MCF 10A (cell line): ENCODE measurements at regions of chr10 and their contacts with region 1.

Region 1: GRCh38 chr10:101141616-101142532 is 10.8 kb downstream of the TLX1 start:
- DNase-seq: peak; percentile 87
- H3K4me3 Mint-ChIP-seq: no peak overlapping the region
- H3K27ac Mint-ChIP-seq: no peak overlapping the region
- H3K4me1 Mint-ChIP-seq: peaks cover 16% of the 10 kb centered on the region
- H3K27me3 Mint-ChIP-seq: peaks cover 41% of the 10 kb centered on the region
- CTCF ChIP-seq: peak; percentile 96

Region 2: GRCh38 chr10:100744987-100745881 is 396.6 kb before region 1 on chr10 and contains the start of gene PAX2:
- CTCF ChIA-PET with region 1: no interaction called
- POLR2A ChIA-PET with region 1: no interaction called
- intact Hi-C with region 1: no loop called
- DNase-seq: no peak
- H3K4me3 Mint-ChIP-seq: peak within 1 kb of the TSS; percentile 28
- H3K27ac Mint-ChIP-seq: no peak within 1 kb of the TSS
- H3K4me1 Mint-ChIP-seq: peaks cover 7% of the 10 kb centered on the region
- H3K27me3 Mint-ChIP-seq: peaks cover 94% of the 10 kb centered on the region
- CTCF ChIP-seq: no peak
- total RNA-seq, gene PAX2: not detected in 2 replicates

Region 3: GRCh38 chr10:101050208-101051069 is 91.4 kb before region 1 on chr10:
- CTCF ChIA-PET with region 1: interaction called, 29 read pairs
- POLR2A ChIA-PET with region 1: interaction called, 3 read pairs
- intact Hi-C with region 1: no loop called
- DNase-seq: peak; percentile 64
- H3K4me3 Mint-ChIP-seq: peak overlapping the region; percentile 47
- H3K27ac Mint-ChIP-seq: no peak overlapping the region
- H3K4me1 Mint-ChIP-seq: peaks cover 8% of the 10 kb centered on the region
- H3K27me3 Mint-ChIP-seq: no peaks in the 10 kb centered on the region
- CTCF ChIP-seq: peak; percentile 85

Region 4: GRCh38 chr10:101075775-101076174 is 66.1 kb before region 1 on chr10:
- CTCF ChIA-PET with region 1: interaction called, 16 read pairs
- POLR2A ChIA-PET with region 1: interaction called, 4 read pairs
- intact Hi-C with region 1: no loop called
- DNase-seq: no peak
- H3K4me3 Mint-ChIP-seq: no peak overlapping the region
- H3K27ac Mint-ChIP-seq: no peak overlapping the region
- H3K4me1 Mint-ChIP-seq: peaks cover 8% of the 10 kb centered on the region
- H3K27me3 Mint-ChIP-seq: peaks cover 47% of the 10 kb centered on the region
- CTCF ChIP-seq: no peak

Region 5: DNA sequence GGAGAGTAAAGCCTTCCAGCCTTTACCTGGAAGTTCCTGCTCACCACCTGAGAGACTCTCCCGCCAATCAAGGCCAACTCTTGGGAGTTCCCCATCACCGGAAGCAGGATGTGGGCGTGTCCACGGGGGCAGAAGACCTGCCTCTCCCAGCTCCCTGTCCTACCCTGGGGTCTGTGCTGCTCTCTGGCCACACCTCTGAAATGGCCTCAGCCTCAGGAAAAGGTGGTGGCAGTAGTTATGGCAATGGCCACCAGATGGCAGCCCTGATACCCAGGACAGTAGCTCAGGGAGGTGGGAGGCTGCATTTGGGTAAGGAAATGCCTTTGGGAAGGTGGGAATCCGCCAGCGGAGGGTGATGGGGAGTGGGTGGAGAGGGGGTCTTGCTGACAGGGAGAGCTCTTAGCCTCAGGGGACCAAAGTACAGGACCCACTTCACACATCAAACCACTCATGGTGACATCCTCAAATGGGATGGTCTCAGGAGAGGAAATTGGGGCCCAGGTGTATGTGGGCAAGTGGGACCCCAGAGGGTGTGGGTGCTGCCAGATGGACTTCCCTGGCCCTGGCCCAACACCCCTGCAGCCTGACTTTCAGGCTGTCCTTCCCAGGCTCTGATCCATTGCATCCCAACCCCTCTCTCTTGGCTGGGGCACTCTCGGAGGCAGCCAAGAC is 46.2 kb before region 1 on chr10:
- CTCF ChIA-PET with region 1: interaction called, 419 read pairs
- POLR2A ChIA-PET with region 1: interaction called, 19 read pairs
- intact Hi-C with region 1: loop called (anchors 1 kb)
- DNase-seq: peak; percentile 86
- H3K4me3 Mint-ChIP-seq: no peak overlapping the region
- H3K27ac Mint-ChIP-seq: no peak overlapping the region
- H3K4me1 Mint-ChIP-seq: peaks cover 9% of the 10 kb centered on the region
- H3K27me3 Mint-ChIP-seq: peaks cover 17% of the 10 kb centered on the region
- CTCF ChIP-seq: peak; percentile 74

Region 6: GRCh38 chr10:101120884-101121653 is 20.8 kb before region 1 on chr10:
- CTCF ChIA-PET with region 1: interaction called, 17 read pairs
- POLR2A ChIA-PET with region 1: no interaction called
- intact Hi-C with region 1: no loop called
- DNase-seq: no peak
- H3K4me3 Mint-ChIP-seq: no peak overlapping the region
- H3K27ac Mint-ChIP-seq: no peak overlapping the region
- H3K4me1 Mint-ChIP-seq: peaks cover 8% of the 10 kb centered on the region
- H3K27me3 Mint-ChIP-seq: peaks cover 48% of the 10 kb centered on the region
- CTCF ChIP-seq: no peak

Region 7: GRCh38 chr10:101155896-101156295 is 14.0 kb after region 1 on chr10:
- CTCF ChIA-PET with region 1: interaction called, 60 read pairs
- POLR2A ChIA-PET with region 1: no interaction called
- intact Hi-C with region 1: no loop called
- DNase-seq: no peak
- H3K4me3 Mint-ChIP-seq: no peak overlapping the region
- H3K27ac Mint-ChIP-seq: no peak overlapping the region
- H3K4me1 Mint-ChIP-seq: peaks cover 9% of the 10 kb centered on the region
- H3K27me3 Mint-ChIP-seq: peaks cover 37% of the 10 kb centered on the region
- CTCF ChIP-seq: no peak